ENCODE measurements at regions of chr15 and their contacts with region 1.

Region 1: GRCh38 chr15:73081321-73081958 is 29.2 kb downstream of the NEO1 start:
- DNase-seq: no peak
- ATAC-seq: no peak
- H3K4me3 Mint-ChIP-seq: no peak overlapping the region
- H3K27ac Mint-ChIP-seq: no peak overlapping the region
- H3K4me1 Mint-ChIP-seq: peaks cover 28% of the 10 kb centered on the region
- H3K27me3 Mint-ChIP-seq: no peaks in the 10 kb centered on the region; the same call in 1 of the 2 replicates
- CTCF ChIP-seq: 0 out of 2 replicates have a peak, but pooled peaks have one; percentile 17

Region 2: DNA sequence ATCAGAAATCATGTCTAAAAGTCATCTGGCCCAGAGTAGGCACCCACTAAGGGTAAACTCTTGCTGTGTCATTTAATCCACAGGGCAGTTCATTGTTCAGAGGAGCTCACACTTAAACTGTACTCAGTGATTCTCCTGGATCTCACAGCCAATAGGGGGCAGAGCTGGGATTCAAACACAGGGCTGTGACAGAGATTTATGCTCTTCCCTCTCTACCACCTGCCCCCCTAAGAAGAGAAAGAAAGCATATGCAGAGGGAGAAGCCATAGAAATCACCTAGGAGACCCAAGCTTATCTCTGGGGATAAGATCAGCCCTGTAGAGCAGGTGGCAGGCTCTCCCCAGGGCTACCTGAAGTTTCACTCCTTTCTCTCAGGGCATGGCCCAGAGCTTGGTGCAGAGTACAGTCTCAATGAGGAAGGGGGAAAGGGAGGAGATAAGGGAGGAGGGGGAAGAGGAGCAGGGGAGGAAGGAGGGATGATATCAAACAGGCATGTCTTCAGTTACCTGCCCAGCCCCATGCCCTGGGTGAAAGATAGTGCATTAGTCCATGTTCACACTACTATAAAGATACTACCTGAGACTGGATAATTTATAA is 246.0 kb before region 1 on chr15:
- CTCF ChIA-PET with region 1: interaction called, 23 read pairs
- POLR2A ChIA-PET with region 1: no interaction called
- DNase-seq: peak; percentile 50
- ATAC-seq: peak; percentile 98
- H3K4me3 Mint-ChIP-seq: no peak overlapping the region
- H3K27ac Mint-ChIP-seq: no peak overlapping the region
- H3K4me1 Mint-ChIP-seq: peaks cover 13% of the 10 kb centered on the region
- H3K27me3 Mint-ChIP-seq: no peaks in the 10 kb centered on the region
- CTCF ChIP-seq: no peak; the same call in 1 of the 2 replicates

Region 3: GRCh38 chr15:73051811-73052678 is 29.4 kb before region 1 on chr15 and contains the start of gene NEO1:
- CTCF ChIA-PET with region 1: interaction called, 12 read pairs
- POLR2A ChIA-PET with region 1: interaction called, 4 read pairs
- DNase-seq: peak; percentile 91
- ATAC-seq: peak; percentile 75
- H3K4me3 Mint-ChIP-seq: peak within 1 kb of the TSS; percentile 77
- H3K27ac Mint-ChIP-seq: peak within 1 kb of the TSS; percentile 73
- H3K4me1 Mint-ChIP-seq: peaks cover 23% of the 10 kb centered on the region
- H3K27me3 Mint-ChIP-seq: peaks cover 8% of the 10 kb centered on the region
- CTCF ChIP-seq: no peak
- total RNA-seq, gene NEO1: 33.4 to 39.5 TPM (median 37.1 TPM) in 3 replicates